ENCODE measurements at regions of chr10 and their contacts with region 1.

Region 1: GRCh38 chr10:38047666-38048065 is 37.2 kb downstream of the ZNF33A start:
- DNase-seq: no peak
- ATAC-seq: no peak
- H3K4me3 ChIP-seq: no peak overlapping the region
- H3K4me3 Mint-ChIP-seq: no peak overlapping the region
- H3K27ac ChIP-seq: no peak overlapping the region
- H3K27ac Mint-ChIP-seq: no peak overlapping the region
- H3K4me1 ChIP-seq: peaks cover 0 to 2% of the 10 kb centered on the region in 2 experiments
- H3K4me1 Mint-ChIP-seq: peaks cover 19 to 23% (median 23%) of the 10 kb centered on the region in 3 donors
- H3K27me3 ChIP-seq: no peaks in the 10 kb centered on the region
- H3K27me3 Mint-ChIP-seq: no peaks in the 10 kb centered on the region

Region 2: DNA sequence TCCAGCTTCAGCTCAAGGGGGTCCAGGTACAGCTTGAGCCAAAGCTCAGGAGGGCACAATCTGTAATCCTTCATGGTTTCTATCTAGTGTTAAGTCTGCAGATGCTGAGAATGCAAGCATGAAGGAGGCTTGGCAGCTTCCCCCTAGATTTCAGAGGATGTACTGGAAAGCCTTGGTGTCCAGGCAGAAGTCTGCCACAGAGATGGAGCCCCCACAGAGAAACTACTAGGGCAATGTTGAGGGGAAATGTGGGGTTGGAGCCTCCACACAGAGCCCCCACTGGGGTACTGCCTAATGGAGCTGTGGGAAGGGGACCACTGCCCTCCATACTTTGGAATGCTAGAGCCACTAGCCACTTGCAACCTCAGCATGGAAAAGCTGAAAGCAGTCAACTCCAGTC is 82.7 kb before region 1 on chr10:
- CTCF ChIA-PET with region 1: no interaction called
- POLR2A ChIA-PET with region 1: no interaction called
- DNase-seq: no peak
- ATAC-seq: no peak
- H3K4me3 ChIP-seq: peak overlapping the region in 1 of 2 donors; percentile 27
- H3K4me3 Mint-ChIP-seq: no peak overlapping the region
- H3K27ac ChIP-seq: no peak overlapping the region
- H3K27ac Mint-ChIP-seq: no peak overlapping the region
- H3K4me1 ChIP-seq: no peaks in the 10 kb centered on the region
- H3K4me1 Mint-ChIP-seq: peaks cover 0 to 4% (median 0%) of the 10 kb centered on the region in 3 donors
- H3K27me3 ChIP-seq: no peaks in the 10 kb centered on the region
- H3K27me3 Mint-ChIP-seq: no peaks in the 10 kb centered on the region

Region 3: GRCh38 chr10:38103756-38104155 is 56.1 kb after region 1 on chr10:
- CTCF ChIA-PET with region 1: no interaction called
- POLR2A ChIA-PET with region 1: interaction called in 1 of 2 experiments, 10 read pairs
- DNase-seq: no peak
- ATAC-seq: no peak
- H3K4me3 ChIP-seq: no peak overlapping the region
- H3K4me3 Mint-ChIP-seq: no peak overlapping the region
- H3K27ac ChIP-seq: no peak overlapping the region
- H3K27ac Mint-ChIP-seq: no peak overlapping the region
- H3K4me1 ChIP-seq: no peaks in the 10 kb centered on the region
- H3K4me1 Mint-ChIP-seq: peaks cover 0 to 3% (median 0%) of the 10 kb centered on the region in 3 donors
- H3K27me3 ChIP-seq: no peaks in the 10 kb centered on the region
- H3K27me3 Mint-ChIP-seq: no peaks in the 10 kb centered on the region